Naive thymus-derived CD4-positive, alpha-beta T cell (primary cell): ENCODE measurements at regions of chr1 and their contacts with region 1.

Region 1: GRCh38 chr1:100979631-100980030 is 46.0 kb downstream of the DPH5 start:
- DNase-seq: no peak
- ATAC-seq: no peak
- H3K4me3 ChIP-seq: no peak overlapping the region
- H3K4me3 Mint-ChIP-seq: no peak overlapping the region
- H3K27ac ChIP-seq: no peak overlapping the region
- H3K27ac Mint-ChIP-seq: peak overlapping the region in 1 of 9 donors; percentile 37
- H3K4me1 ChIP-seq: no peaks in the 10 kb centered on the region
- H3K4me1 Mint-ChIP-seq: peaks cover 4 to 49% (median 40%) of the 10 kb centered on the region in 7 donors
- H3K27me3 ChIP-seq: no peaks in the 10 kb centered on the region
- H3K27me3 Mint-ChIP-seq: no peaks in the 10 kb centered on the region

Region 2: GRCh38 chr1:100995198-100995988 is 15.8 kb after region 1 on chr1:
- CTCF ChIA-PET with region 1: interaction called, 5 read pairs
- POLR2A ChIA-PET with region 1: interaction called, 6 read pairs
- intact Hi-C with region 1: loop called in 1 of 2 experiments (anchors 2 kb)
- DNase-seq: peak in 3 of 9 donors; percentile 22 to 29 (median 26)
- ATAC-seq: no peak
- H3K4me3 ChIP-seq: no peak overlapping the region
- H3K4me3 Mint-ChIP-seq: peak overlapping the region in 6 of 10 donors; percentile 31 to 69 (median 56)
- H3K27ac ChIP-seq: no peak overlapping the region
- H3K27ac Mint-ChIP-seq: peak overlapping the region; percentile 10 to 79 (median 60)
- H3K4me1 ChIP-seq: peaks cover 0 to 14% of the 10 kb centered on the region in 2 donors
- H3K4me1 Mint-ChIP-seq: peaks cover 12 to 57% (median 26%) of the 10 kb centered on the region in 7 donors
- H3K27me3 ChIP-seq: no peaks in the 10 kb centered on the region
- H3K27me3 Mint-ChIP-seq: no peaks in the 10 kb centered on the region

Region 3: DNA sequence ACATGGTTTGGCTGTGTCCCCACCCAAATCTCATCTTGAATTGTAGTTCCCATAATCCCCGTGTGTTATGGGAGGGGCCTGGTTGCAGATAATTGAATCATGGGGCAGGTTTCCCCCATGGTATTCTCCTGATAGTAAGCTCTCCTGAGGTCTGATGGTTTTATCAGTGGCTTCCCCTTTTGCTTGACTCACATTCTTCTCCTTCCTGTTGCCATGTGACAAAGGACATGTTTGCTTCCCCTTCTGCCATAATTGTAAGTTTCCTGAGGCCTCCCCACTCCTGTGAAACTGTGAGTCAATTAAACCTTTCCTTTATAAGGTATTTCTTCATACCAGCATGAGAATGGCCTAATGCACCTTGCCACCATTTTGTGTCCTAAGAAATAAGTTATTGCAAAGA is 1713.7 kb after region 1 on chr1:
- CTCF ChIA-PET with region 1: no interaction called
- POLR2A ChIA-PET with region 1: no interaction called
- intact Hi-C with region 1: no loop called
- DNase-seq: no peak
- ATAC-seq: no peak
- H3K4me3 ChIP-seq: no peak overlapping the region
- H3K4me3 Mint-ChIP-seq: no peak overlapping the region
- H3K27ac ChIP-seq: no peak overlapping the region
- H3K27ac Mint-ChIP-seq: no peak overlapping the region
- H3K4me1 ChIP-seq: no peaks in the 10 kb centered on the region
- H3K4me1 Mint-ChIP-seq: no peaks in the 10 kb centered on the region
- H3K27me3 ChIP-seq: no peaks in the 10 kb centered on the region
- H3K27me3 Mint-ChIP-seq: no peaks in the 10 kb centered on the region